HepG2 (cell line): ENCODE measurements at regions of chr19 and their contacts with region 1.

Region 1: DNA sequence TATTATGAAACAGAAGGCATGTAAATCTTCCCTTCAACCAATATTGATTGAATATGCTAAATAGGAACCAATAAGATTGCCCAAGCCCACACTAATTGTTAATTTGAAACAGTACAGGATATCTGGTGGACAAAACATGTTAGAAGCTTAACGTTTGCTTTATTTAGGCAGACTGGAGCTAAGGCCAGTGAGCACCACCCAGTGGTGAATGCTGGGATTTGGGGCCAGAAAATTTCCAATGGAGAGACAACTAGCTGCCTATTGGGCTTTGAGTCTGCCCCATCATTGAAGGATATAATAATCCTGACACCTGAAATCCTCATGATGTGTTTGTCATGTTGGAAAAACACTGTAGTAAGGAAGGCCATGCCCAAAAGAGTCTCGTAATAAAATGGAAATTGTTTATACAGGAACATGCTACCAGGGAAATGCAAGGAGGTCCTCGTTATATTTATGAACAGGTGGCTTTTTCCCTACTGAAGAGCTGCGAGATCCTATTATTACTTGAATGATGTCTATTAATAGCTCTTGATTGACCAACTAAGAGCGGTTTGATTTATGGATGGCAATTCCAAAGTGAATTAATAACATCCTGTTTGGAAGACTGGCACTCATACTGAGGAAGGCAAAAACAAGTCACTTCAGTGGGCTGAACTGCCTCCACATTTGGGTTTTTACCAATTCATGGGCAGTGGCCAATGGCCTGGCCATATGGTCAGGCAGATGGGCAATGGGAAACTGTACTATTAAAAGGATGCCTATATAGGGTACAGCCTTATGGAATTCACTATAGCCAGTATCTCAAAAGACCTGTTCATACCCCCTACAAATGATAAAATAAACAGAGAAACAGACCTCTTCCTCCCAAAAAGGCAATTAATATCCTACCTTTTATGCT is 8.7 kb downstream of the SIGLECL1 start:
- DNase-seq: peak; percentile 24
- ATAC-seq: peak; percentile 64; the same call in 1 of the 3 replicates
- H3K4me3 ChIP-seq: no peak overlapping the region
- H3K27ac ChIP-seq: no peak overlapping the region
- H3K4me1 ChIP-seq: no peaks in the 10 kb centered on the region
- H3K27me3 ChIP-seq: peaks cover 0 to 8% of the 10 kb centered on the region in 2 experiments; a peak in 1 of 5 replicates
- CTCF ChIP-seq: peak; percentile 69
- EP300 ChIP-seq: no peak
- POLR2A ChIP-seq: no peak
- RAD21 ChIP-seq: no peak

Region 2: DNA sequence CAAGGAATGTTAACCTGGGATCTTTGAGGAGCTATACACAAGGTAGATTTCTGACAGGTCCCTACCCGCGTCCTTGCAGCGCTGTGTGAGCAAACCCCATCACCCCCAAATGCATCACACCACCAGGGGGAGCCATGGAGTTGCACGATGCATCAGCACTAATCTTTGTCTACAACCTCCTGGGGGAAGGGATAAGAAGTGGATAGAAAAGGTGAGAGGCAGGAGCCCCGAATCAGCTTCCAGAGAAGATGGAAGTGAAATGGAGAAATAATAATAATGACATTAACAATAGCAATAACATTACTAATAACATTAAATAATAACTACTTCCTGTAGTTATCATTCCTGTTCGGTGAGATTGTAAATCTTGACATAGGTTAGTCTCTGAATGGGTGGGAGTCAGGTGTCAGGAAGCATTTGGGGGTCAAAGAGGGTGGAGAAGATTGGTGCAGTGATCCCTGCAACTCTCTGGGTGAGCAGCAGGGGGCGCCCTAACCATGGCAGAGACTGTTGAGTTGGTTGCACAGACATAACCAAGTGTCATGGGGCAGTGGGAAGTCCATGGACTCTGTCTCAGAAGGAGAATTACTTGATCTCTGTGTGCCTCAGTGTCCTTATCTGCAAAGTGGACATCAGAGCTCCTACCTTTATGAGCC is 101.0 kb before region 1 on chr19:
- CTCF ChIA-PET with region 1: interaction called, 12 read pairs
- POLR2A ChIA-PET with region 1: no interaction called
- in situ Hi-C with region 1: loop called (anchors 10 kb)
- intact Hi-C with region 1: no loop called
- DNase-seq: peak; percentile 42
- ATAC-seq: peak; percentile 66
- H3K4me3 ChIP-seq: no peak overlapping the region
- H3K27ac ChIP-seq: no peak overlapping the region
- H3K4me1 ChIP-seq: no peaks in the 10 kb centered on the region
- H3K27me3 ChIP-seq: peaks cover 6 to 22% of the 10 kb centered on the region in 2 experiments; a peak in 2 of 5 replicates
- CTCF ChIP-seq: peak; percentile 51
- EP300 ChIP-seq: no peak
- POLR2A ChIP-seq: no peak
- RAD21 ChIP-seq: no peak